ENCODE measurements at regions of chr18 and their contacts with region 1.

Region 1: GRCh38 chr18:62131301-62131909 is 55.5 kb downstream of the PIGN start:
- DNase-seq: no peak
- ATAC-seq: peak; percentile 62
- H3K4me3 Mint-ChIP-seq: no peak overlapping the region
- H3K27ac Mint-ChIP-seq: no peak overlapping the region
- H3K4me1 Mint-ChIP-seq: no peaks in the 10 kb centered on the region
- H3K27me3 Mint-ChIP-seq: no peaks in the 10 kb centered on the region
- CTCF ChIP-seq: peak; percentile 82

Region 2: GRCh38 chr18:60809937-60810336 is 1321.5 kb before region 1 on chr18:
- CTCF ChIA-PET with region 1: no interaction called
- POLR2A ChIA-PET with region 1: no interaction called
- intact Hi-C with region 1: loop called (anchors 5 kb)
- DNase-seq: no peak
- ATAC-seq: no peak
- H3K4me3 Mint-ChIP-seq: no peak overlapping the region
- H3K27ac Mint-ChIP-seq: no peak overlapping the region
- H3K4me1 Mint-ChIP-seq: no peaks in the 10 kb centered on the region
- H3K27me3 Mint-ChIP-seq: no peaks in the 10 kb centered on the region
- CTCF ChIP-seq: no peak

Region 3: GRCh38 chr18:61551586-61551985 is 579.8 kb before region 1 on chr18:
- CTCF ChIA-PET with region 1: interaction called, 5 read pairs
- POLR2A ChIA-PET with region 1: no interaction called
- intact Hi-C with region 1: loop called (anchors 1 kb)
- DNase-seq: no peak
- ATAC-seq: no peak
- H3K4me3 Mint-ChIP-seq: no peak overlapping the region
- H3K27ac Mint-ChIP-seq: no peak overlapping the region
- H3K4me1 Mint-ChIP-seq: peaks cover 1% of the 10 kb centered on the region
- H3K27me3 Mint-ChIP-seq: peaks cover 5% of the 10 kb centered on the region
- CTCF ChIP-seq: no peak

Region 4: GRCh38 chr18:61635901-61636528 is 495.4 kb before region 1 on chr18:
- CTCF ChIA-PET with region 1: interaction called, 23 read pairs
- POLR2A ChIA-PET with region 1: no interaction called
- intact Hi-C with region 1: loop called (anchors 1 kb)
- DNase-seq: no peak
- ATAC-seq: no peak
- H3K4me3 Mint-ChIP-seq: no peak overlapping the region
- H3K27ac Mint-ChIP-seq: no peak overlapping the region
- H3K4me1 Mint-ChIP-seq: no peaks in the 10 kb centered on the region
- H3K27me3 Mint-ChIP-seq: peaks cover 2% of the 10 kb centered on the region
- CTCF ChIP-seq: no peak

Region 5: DNA sequence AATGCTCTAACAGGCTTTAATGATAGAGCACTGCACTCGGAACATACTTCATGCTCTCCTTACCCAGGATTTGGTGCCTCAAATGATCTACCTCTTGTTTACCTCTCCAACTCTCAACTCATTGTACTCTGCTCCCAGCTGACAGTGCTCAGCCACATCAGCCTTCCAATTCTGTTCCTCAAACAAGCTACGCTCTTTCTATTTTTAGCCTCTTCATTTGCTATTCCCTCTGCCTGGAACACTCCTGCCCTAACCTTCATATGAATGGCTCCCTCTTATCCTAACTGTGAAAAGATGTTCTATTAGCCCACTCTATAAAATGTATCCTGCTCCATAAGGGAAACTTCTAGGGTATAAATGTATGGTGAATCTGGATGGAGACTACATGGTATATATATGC is 12.9 kb after region 1 on chr18:
- CTCF ChIA-PET with region 1: interaction called, 10 read pairs
- POLR2A ChIA-PET with region 1: no interaction called
- intact Hi-C with region 1: no loop called
- DNase-seq: no peak
- ATAC-seq: no peak
- H3K4me3 Mint-ChIP-seq: no peak overlapping the region
- H3K27ac Mint-ChIP-seq: no peak overlapping the region
- H3K4me1 Mint-ChIP-seq: no peaks in the 10 kb centered on the region
- H3K27me3 Mint-ChIP-seq: no peaks in the 10 kb centered on the region
- CTCF ChIP-seq: no peak

Region 6: DNA sequence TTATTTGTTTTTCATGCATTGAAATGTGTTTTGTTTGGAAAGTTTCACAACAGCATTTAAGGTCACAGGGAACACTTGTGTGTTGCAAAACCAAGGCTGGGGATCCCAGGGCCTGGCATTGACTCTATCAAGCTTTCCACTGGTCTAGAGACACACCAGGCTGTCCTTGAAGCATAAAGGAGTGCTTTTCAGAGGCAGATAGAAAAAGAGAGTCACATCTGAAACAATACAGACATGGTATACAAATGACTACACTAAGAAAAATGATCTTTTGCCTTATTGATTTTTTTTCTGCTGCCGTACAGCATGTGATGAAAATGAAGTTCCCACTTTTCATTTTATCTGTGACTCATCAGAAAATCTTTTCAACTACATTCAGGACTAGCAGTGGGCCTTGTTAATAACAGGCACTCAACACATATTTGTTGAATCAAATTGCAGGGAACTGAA is 329.5 kb after region 1 on chr18:
- CTCF ChIA-PET with region 1: no interaction called
- POLR2A ChIA-PET with region 1: no interaction called
- intact Hi-C with region 1: no loop called
- DNase-seq: no peak
- ATAC-seq: no peak
- H3K4me3 Mint-ChIP-seq: no peak overlapping the region
- H3K27ac Mint-ChIP-seq: no peak overlapping the region
- H3K4me1 Mint-ChIP-seq: no peaks in the 10 kb centered on the region
- H3K27me3 Mint-ChIP-seq: no peaks in the 10 kb centered on the region
- CTCF ChIP-seq: no peak

Region 7: DNA sequence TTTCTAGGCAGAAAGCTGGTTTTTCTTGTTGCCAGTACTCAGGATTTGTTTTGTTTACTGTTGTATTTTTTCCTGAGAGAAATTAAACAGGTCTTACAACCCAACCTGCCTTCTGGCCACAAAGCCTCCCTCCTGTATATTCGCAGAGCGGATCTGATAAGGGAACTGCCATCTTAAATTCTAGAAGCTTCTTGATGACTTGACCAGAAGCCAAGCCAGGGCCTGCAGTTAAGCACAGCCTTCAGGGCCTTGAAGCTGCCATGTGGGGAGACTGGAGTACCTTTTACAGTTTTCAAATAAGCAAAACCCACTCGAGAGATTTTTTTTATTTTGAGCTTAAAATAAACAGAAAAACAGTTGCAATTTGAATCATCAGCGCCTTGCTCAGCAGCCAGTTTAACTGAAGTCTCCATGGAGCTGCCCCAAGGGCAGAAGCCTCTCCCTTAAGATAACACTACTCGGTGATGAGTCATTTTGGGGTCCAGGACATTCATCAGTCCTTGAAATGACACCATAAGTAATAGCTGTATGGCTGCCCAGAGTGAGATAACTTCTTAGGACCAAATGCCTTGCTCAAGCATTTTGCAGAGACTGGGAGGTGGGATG is 532.4 kb after region 1 on chr18:
- CTCF ChIA-PET with region 1: no interaction called
- POLR2A ChIA-PET with region 1: no interaction called
- intact Hi-C with region 1: no loop called
- DNase-seq: no peak
- ATAC-seq: no peak
- H3K4me3 Mint-ChIP-seq: no peak overlapping the region
- H3K27ac Mint-ChIP-seq: no peak overlapping the region
- H3K4me1 Mint-ChIP-seq: no peaks in the 10 kb centered on the region
- H3K27me3 Mint-ChIP-seq: no peaks in the 10 kb centered on the region
- CTCF ChIP-seq: no peak

Region 8: GRCh38 chr18:62729487-62730386 is 598.3 kb after region 1 on chr18:
- CTCF ChIA-PET with region 1: no interaction called
- POLR2A ChIA-PET with region 1: no interaction called
- intact Hi-C with region 1: no loop called
- DNase-seq: no peak
- ATAC-seq: peak; percentile 28
- H3K4me3 Mint-ChIP-seq: peak overlapping the region; percentile 28
- H3K27ac Mint-ChIP-seq: peak overlapping the region; percentile 30
- H3K4me1 Mint-ChIP-seq: peaks cover 39% of the 10 kb centered on the region
- H3K27me3 Mint-ChIP-seq: no peaks in the 10 kb centered on the region
- CTCF ChIP-seq: no peak